ENCODE measurements at regions of chr10 and their contacts with region 1.

Region 1: GRCh38 chr10:905503-905902 is 26.0 kb downstream of the LARP4B start:
- DNase-seq: peak in 2 of 4 experiments; percentile 26 to 28
- ATAC-seq: peak; percentile 76
- H3K4me3 ChIP-seq: no peak overlapping the region
- H3K27ac ChIP-seq: no peak overlapping the region
- H3K4me1 ChIP-seq: peaks cover 0 to 4% of the 10 kb centered on the region in 2 experiments; a peak in 3 of 5 replicates
- H3K27me3 ChIP-seq: no peaks in the 10 kb centered on the region
- CTCF ChIP-seq: no peak
- EP300 ChIP-seq: no peak
- POLR2A ChIP-seq: no peak
- RAD21 ChIP-seq: no peak

Region 2: DNA sequence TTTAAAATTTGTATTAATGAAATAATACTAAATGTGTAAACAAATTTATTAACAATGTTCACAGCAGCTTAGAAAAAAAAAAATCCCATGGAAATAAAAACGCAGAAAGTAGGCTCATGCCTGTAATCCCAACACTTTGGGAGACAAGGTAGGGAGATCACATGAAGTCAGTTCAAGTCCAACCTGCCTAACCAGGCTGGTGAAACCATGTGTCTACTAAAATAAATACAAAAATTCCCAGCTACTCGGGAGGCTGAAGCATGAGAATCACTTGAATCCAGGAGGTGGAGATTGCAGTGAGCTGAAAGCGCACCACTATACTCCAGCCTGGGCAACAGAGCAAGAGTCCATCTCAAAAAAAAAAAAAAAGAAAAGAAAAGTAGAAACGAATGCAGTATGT is 10.2 kb before region 1 on chr10:
- CTCF ChIA-PET with region 1: no interaction called
- POLR2A ChIA-PET with region 1: interaction called, 14 read pairs
- in situ Hi-C with region 1: no loop called
- intact Hi-C with region 1: no loop called
- DNase-seq: no peak
- ATAC-seq: no peak
- H3K4me3 ChIP-seq: no peak overlapping the region
- H3K27ac ChIP-seq: no peak overlapping the region
- H3K4me1 ChIP-seq: no peaks in the 10 kb centered on the region
- H3K27me3 ChIP-seq: no peaks in the 10 kb centered on the region
- CTCF ChIP-seq: no peak
- EP300 ChIP-seq: no peak
- POLR2A ChIP-seq: no peak
- RAD21 ChIP-seq: no peak

Measured in K562 (cell line).